ENCODE measurements at regions of chr10 and their contacts with region 1.

Region 1: DNA sequence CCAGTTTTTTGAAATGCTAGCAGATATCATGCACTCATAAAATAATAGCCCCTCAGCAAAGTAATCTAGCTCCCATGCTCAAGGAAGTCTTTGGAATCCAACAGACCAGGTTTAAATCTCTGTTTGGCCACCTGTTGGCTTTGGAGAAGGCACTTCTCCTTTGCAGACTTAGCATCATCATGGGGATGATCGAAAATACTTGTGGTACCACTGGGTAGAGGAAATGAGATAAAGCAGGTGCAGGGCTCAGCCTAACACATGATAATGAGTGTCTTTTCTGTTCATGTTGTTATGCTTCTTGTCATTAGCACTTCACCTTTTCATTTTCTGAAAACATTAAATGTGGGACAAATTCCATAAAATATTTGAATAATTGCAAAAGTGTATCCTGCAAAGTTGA is 67.4 kb downstream of the LRRC18 start:
- H3K4me3 ChIP-seq: no peak overlapping the region
- H3K27ac ChIP-seq: no peak overlapping the region
- H3K4me1 ChIP-seq: no peaks in the 10 kb centered on the region
- CTCF ChIP-seq: no peak

Region 2: GRCh38 chr10:48551861-48552591 is 320.2 kb before region 1 on chr10:
- CTCF ChIA-PET with region 1: no interaction called
- POLR2A ChIA-PET with region 1: no interaction called
- H3K4me3 ChIP-seq: no peak overlapping the region
- H3K27ac ChIP-seq: no peak overlapping the region
- H3K4me1 ChIP-seq: no peaks in the 10 kb centered on the region
- CTCF ChIP-seq: no peak

Region 3: DNA sequence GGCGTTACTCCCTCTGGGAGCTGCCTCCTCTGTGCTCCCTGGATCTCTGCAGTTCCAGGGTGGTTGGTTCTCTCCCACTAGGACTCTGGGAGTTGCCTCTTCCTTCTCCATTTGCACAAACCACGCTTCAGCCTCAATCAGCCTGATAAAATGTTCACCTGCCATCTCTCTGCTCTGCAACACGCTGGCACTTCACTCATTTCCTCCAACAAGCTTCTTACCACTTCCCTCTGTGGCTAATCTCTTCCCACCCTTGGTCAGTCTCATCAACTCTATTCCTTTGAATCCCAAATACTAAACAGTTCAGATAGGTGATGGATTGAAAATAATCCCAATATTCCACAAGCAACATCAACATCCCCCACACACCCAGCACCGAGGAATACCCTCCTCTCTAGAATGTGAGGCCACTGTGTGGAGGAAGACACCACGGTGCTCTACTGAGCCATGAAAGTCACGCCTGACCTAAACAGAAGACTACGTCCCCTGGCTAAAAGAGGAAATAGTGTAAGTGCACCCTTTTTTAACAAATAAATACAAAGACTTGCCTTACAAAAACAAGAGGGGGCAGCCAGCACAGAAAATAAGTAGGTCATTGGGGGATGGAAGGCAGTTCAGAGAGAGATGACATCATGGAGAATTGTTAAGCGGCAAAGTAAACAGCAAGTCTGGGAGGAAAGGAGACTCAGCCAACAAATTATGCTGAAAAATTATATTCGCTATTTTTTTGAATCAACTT is 263.5 kb after region 1 on chr10:
- CTCF ChIA-PET with region 1: interaction called, 10 read pairs
- POLR2A ChIA-PET with region 1: no interaction called
- H3K4me3 ChIP-seq: no peak overlapping the region
- H3K27ac ChIP-seq: no peak overlapping the region
- H3K4me1 ChIP-seq: no peaks in the 10 kb centered on the region
- CTCF ChIP-seq: no peak

Measured in HEK293 (cell line).